Sciatic nerve (tissue), 2 donors: ENCODE measurements at regions of chr5 and their contacts with region 1.

Region 1: GRCh38 chr5:140642718-140643117 is 3.5 kb downstream of the TMCO6 start:
- DNase-seq: no peak
- ATAC-seq: no peak

Region 2: GRCh38 chr5:140346348-140347101 is 296.2 kb before region 1 on chr5 and contains the start of gene HBEGF:
- intact Hi-C with region 1: no loop called
- DNase-seq: peak; percentile 90
- ATAC-seq: peak; percentile 79
- total RNA-seq, gene HBEGF: 21.1 TPM

Region 3: GRCh38 chr5:140564196-140565023 is 78.3 kb before region 1 on chr5 and contains the starts of genes APBB3 and SLC35A4:
- intact Hi-C with region 1: loop called (anchors 5 kb)
- DNase-seq: peak; percentile 97
- ATAC-seq: peak; percentile 97
- total RNA-seq, gene APBB3: 43.1 TPM
- total RNA-seq, gene SLC35A4: 37.9 TPM